ENCODE measurements at regions of chr6 and their contacts with region 1.

Region 1: DNA sequence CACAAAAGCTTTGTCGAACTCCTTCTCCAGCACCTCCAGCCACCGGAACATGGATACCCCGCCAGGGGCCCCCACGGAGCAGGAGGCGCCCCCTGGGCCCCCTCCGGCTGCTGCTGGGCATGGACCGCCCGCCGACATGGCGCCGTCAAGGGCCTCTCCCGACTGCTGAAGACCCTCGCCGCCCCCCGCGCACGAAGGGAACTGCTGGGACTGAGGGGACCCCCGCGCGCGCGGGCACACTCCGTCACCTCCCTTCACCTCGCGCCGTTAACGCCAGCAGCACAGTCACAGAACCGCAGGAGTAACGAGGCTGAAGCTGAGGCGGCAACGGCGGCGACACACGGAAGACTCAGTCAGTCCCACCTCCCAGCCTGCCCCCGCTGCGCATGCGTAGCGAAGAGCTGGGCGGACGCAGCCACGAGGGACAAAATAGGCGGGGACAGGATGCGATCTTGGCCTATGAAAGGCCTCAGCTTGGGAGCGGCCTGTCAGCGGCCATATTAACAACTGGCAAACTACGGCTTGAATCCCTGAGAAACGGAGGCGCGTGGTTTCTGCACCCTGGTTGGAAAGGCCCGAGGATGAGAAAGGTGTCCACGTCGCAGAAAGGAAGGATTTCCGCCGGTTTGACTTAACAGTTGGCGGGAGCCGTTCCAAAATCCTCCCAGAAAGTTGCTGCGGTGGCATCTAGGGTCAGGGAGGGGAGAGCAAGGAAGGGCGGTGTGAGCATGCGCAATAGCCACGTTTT is at the start of gene GOPC:
- DNase-seq: peak; percentile 96 to 98 (median 97)
- ATAC-seq: peak; percentile 93
- H3K4me3 ChIP-seq: peak within 1 kb of the TSS; percentile 74
- H3K27ac ChIP-seq: peak within 1 kb of the TSS; percentile 84
- H3K4me1 ChIP-seq: peaks cover 4 to 6% of the 10 kb centered on the region in 2 experiments; a peak in 3 of 5 replicates
- H3K27me3 ChIP-seq: no peaks in the 10 kb centered on the region
- CTCF ChIP-seq: peak; percentile 32 to 54 (median 37); a peak in 4 of 6 replicates
- EP300 ChIP-seq: no peak; the same call in 1 of the 2 replicates
- POLR2A ChIP-seq: peak; percentile 95
- RAD21 ChIP-seq: no peak; a peak in 1 of 4 replicates
- polyA plus RNA-seq, gene GOPC: 10.0 to 12.2 TPM

Region 2: DNA sequence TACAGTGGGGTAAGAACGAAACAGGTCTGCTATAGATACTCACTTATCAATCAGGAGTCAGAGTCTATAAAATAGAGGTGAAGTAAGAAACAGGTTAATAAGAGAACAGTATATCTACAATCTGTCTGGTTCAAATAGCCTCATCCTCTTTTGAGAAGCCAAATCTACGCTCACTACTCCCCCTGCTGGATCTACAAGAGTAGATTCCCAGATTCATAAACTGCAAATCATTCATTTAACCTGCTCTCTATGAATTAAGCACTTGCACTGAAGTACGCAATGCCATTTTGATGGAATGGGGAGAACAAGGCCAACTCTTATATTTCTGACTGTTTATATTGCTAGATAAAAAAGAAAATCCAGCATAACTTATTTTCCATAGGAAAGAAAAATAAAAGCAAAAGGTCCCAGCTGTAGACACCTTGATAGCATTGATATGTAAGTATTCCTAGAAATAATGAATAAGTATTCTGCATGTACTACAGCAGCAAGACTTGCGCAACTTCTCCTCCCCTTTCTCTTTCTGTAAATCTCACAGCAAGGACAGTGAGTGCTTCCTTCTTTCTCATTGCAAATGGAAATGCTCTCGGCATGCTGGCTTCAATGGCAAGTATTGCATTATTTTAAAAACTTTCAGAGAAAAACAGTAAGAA is 633.0 kb before region 1 on chr6:
- CTCF ChIA-PET with region 1: no interaction called
- POLR2A ChIA-PET with region 1: interaction called, 4 read pairs
- in situ Hi-C with region 1: no loop called
- intact Hi-C with region 1: loop called (anchors 5 kb)
- DNase-seq: peak; percentile 19 to 64 (median 42)
- ATAC-seq: peak; percentile 89
- H3K4me3 ChIP-seq: no peak overlapping the region
- H3K27ac ChIP-seq: no peak overlapping the region
- H3K4me1 ChIP-seq: no peaks in the 10 kb centered on the region
- H3K27me3 ChIP-seq: no peaks in the 10 kb centered on the region
- CTCF ChIP-seq: peak; percentile 58 to 69 (median 63)
- EP300 ChIP-seq: no peak
- POLR2A ChIP-seq: no peak
- RAD21 ChIP-seq: peak; percentile 28 to 75

Region 3: DNA sequence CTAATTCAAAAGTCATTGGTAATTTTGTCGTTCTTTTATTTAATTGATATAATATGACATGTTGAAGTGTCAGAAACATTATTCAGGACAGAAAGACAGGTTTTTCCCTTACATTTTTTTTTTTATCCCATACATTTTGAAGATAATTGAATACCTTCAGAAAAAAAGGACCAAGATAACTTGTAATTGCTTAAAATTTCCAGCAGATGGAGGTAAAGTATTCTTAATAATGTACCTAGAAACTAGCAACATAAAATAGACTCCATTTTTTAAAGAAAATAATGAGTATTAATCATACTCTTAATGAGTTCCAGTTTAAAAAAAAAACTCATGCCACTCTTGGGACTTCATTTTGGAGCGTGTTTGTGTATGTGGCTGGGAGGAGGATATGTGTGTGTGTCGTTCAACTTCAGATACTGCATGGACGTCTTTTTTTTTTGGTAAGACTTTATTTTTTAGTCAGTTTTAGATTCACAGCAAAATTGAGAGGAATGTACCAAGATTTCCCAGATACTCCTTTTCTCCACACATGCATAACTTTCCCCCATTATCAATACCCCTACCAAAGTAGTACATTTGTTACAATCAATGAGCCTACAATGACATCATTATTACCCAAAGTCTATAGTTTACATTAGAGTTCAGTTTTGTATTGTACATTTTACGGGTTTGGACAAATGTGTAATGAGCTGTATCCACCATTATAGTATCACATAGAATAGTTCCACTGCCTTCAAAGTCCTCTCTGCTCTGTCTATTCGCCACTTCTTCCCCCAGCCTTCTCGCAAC is 256.0 kb before region 1 on chr6:
- CTCF ChIA-PET with region 1: no interaction called
- POLR2A ChIA-PET with region 1: no interaction called
- in situ Hi-C with region 1: no loop called
- intact Hi-C with region 1: loop called (anchors 1 kb)
- DNase-seq: peak in 2 of 4 experiments; percentile 3 to 13
- ATAC-seq: peak; percentile 30; the same call in 2 of the 3 replicates
- H3K4me3 ChIP-seq: no peak overlapping the region
- H3K27ac ChIP-seq: no peak overlapping the region
- H3K4me1 ChIP-seq: peaks cover 0 to 4% of the 10 kb centered on the region in 2 experiments; a peak in 2 of 5 replicates
- H3K27me3 ChIP-seq: no peaks in the 10 kb centered on the region
- CTCF ChIP-seq: peak in 1 of 3 experiments; percentile 62; a peak in 3 of 6 replicates
- EP300 ChIP-seq: no peak
- POLR2A ChIP-seq: no peak
- RAD21 ChIP-seq: peak; percentile 52 to 67; a peak in 3 of 4 replicates

Region 4: GRCh38 chr6:117482240-117483003 is 119.9 kb before region 1 on chr6 and contains the start of gene DCBLD1:
- CTCF ChIA-PET with region 1: no interaction called
- POLR2A ChIA-PET with region 1: interaction called, 4 read pairs
- in situ Hi-C with region 1: loop called (anchors 10 kb)
- intact Hi-C with region 1: loop called (anchors 1 kb)
- DNase-seq: peak; percentile 88 to 92 (median 90)
- ATAC-seq: peak; percentile 88
- H3K4me3 ChIP-seq: peak within 1 kb of the TSS; percentile 76
- H3K27ac ChIP-seq: peak within 1 kb of the TSS; percentile 80
- H3K4me1 ChIP-seq: peaks cover 8 to 21% of the 10 kb centered on the region in 2 experiments; a peak in 4 of 5 replicates
- H3K27me3 ChIP-seq: peaks cover 0 to 7% of the 10 kb centered on the region in 2 experiments; a peak in 2 of 5 replicates
- CTCF ChIP-seq: peak in 2 of 3 experiments; percentile 1 to 9; a peak in 1 of 6 replicates
- EP300 ChIP-seq: no peak
- POLR2A ChIP-seq: no peak; the same call in 1 of the 2 replicates
- RAD21 ChIP-seq: no peak
- polyA plus RNA-seq, gene DCBLD1: 0.80 to 0.87 TPM

Region 5: GRCh38 chr6:117674991-117675657 is 72.8 kb after region 1 on chr6 and contains the start of gene NUS1:
- CTCF ChIA-PET with region 1: no interaction called
- POLR2A ChIA-PET with region 1: no interaction called
- in situ Hi-C with region 1: no loop called
- intact Hi-C with region 1: loop called (anchors 2 kb)
- DNase-seq: peak; percentile 94 to 98 (median 95)
- ATAC-seq: peak; percentile 93
- H3K4me3 ChIP-seq: peak within 1 kb of the TSS; percentile 89
- H3K27ac ChIP-seq: peak within 1 kb of the TSS; percentile 91
- H3K4me1 ChIP-seq: peaks cover 8 to 33% of the 10 kb centered on the region in 2 experiments
- H3K27me3 ChIP-seq: no peaks in the 10 kb centered on the region
- CTCF ChIP-seq: peak; percentile 84 to 85 (median 85)
- EP300 ChIP-seq: no peak
- POLR2A ChIP-seq: peak; percentile 81
- RAD21 ChIP-seq: 0 out of 4 replicates have a peak, but pooled peaks of 1 of the 2 experiments have one; percentile 16
- polyA plus RNA-seq, gene NUS1: 21.7 to 22.9 TPM